ENCODE measurements at regions of chr2 and their contacts with region 1.

Region 1: GRCh38 chr2:76599732-76600368 is 889.1 kb upstream of the GCFC2 start:
- DNase-seq: peak; percentile 14 to 57
- ATAC-seq: peak; percentile 62 to 86 (median 76)
- H3K4me3 ChIP-seq: no peak overlapping the region
- H3K27ac ChIP-seq: no peak overlapping the region
- H3K4me1 ChIP-seq: no peaks in the 10 kb centered on the region
- H3K27me3 ChIP-seq: no peaks in the 10 kb centered on the region
- CTCF ChIP-seq: peak; percentile 51 to 80 (median 71)

Region 2: DNA sequence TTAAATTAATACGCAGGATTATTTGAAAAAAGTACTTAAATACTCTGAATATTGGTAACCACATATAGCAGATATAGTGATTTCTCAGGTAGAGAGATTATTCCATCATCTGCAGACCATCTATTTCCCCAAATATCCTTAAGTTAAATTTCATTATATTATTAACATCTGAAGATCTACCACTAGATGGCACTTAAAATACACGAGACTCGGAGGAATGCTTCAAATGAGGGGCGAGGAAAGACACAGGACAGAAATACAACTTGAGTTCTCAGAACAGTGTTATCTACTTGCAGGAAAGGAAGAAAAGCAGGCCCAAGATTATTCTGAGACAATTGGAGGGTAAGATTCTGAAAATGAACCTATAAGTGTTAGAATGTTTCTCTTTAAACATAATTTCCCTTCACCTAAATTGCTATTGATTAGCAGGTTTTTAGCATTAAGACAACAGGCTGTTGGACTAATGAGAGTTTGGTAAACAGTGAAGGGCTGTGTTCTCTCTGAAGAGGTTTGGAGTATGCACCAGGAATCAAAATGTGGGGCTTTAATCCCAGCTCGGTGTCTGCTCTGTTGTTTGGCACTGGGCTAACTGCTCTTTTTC is 812.2 kb before region 1 on chr2:
- intact Hi-C with region 1: loop called in 5 of 10 experiments (anchors 2 to 10 kb)
- DNase-seq: no peak
- ATAC-seq: peak in 1 of 8 donors; percentile 25
- H3K4me3 ChIP-seq: no peak overlapping the region
- H3K27ac ChIP-seq: no peak overlapping the region
- H3K4me1 ChIP-seq: no peaks in the 10 kb centered on the region
- H3K27me3 ChIP-seq: peaks cover 0 to 9% (median 0%) of the 10 kb centered on the region in 7 donors
- CTCF ChIP-seq: peak in 8 of 9 donors; percentile 13 to 60 (median 44)

Region 3: DNA sequence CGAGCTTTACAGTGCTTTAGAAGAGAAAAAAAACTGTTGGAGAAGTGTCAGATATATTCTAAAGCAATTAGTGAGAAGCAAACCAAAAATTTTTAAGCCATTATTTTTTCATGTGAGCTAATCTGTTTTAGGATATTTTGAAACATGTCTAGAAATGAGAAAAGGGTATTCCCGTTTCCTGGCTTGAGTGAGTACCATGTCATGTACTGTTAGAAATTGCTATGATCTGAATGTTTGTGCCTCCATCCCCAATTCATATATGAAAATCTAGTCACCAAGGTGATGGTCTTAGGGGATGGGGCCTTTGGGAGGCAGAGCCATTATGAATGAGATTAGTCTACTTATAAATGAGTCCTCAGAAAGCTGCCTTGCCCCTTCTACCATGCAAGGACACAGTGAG is 395.8 kb before region 1 on chr2:
- intact Hi-C with region 1: loop called in 8 of 10 experiments (anchors 2 to 5 kb)
- DNase-seq: no peak
- ATAC-seq: no peak
- H3K4me3 ChIP-seq: no peak overlapping the region
- H3K27ac ChIP-seq: no peak overlapping the region
- H3K4me1 ChIP-seq: no peaks in the 10 kb centered on the region
- H3K27me3 ChIP-seq: no peaks in the 10 kb centered on the region
- CTCF ChIP-seq: no peak